ENCODE measurements at regions of chr20 and their contacts with region 1.

Region 1: GRCh38 chr20:10476319-10476724 is 41.2 kb downstream of the SLX4IP start:
- DNase-seq: peak; percentile 60
- ATAC-seq: peak; percentile 86
- H3K4me3 ChIP-seq: no peak overlapping the region
- H3K27ac ChIP-seq: peak overlapping the region; percentile 49; the same call in 1 of the 2 replicates
- H3K4me1 ChIP-seq: peaks cover 37% of the 10 kb centered on the region
- H3K27me3 ChIP-seq: no peaks in the 10 kb centered on the region
- CTCF ChIP-seq: peak; percentile 31 to 74 (median 45); a peak in 4 of 6 replicates
- EP300 ChIP-seq: peak; percentile 74 to 90; a peak in 3 of 4 replicates
- POLR2A ChIP-seq: no peak
- RAD21 ChIP-seq: peak; percentile 84

Region 2: DNA sequence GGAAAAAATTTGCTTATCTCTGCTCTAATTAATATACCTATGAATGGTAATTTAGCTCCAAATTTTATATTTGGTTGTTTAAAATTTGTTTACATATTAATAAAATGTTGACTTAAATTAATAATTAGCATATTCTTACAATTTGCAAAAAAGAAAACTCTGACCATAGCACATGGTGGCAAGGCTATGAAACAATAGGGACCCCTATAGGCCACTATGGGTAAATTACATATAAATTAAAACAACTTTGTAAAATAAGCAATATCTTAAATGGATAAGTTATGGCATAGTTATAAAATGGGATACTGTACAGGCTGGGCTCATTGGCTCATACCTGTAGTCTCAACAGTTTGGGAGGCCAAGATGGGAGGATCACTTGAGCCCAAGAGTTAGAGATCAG is 118.3 kb before region 1 on chr20:
- CTCF ChIA-PET with region 1: interaction called, 6 read pairs
- POLR2A ChIA-PET with region 1: interaction called, 3 read pairs
- RAD21 ChIA-PET with region 1: interaction called, 15 read pairs
- SMC1A ChIA-PET with region 1: interaction called, 6 read pairs
- in situ Hi-C with region 1: no loop called
- intact Hi-C with region 1: loop called (anchors 5 kb)
- DNase-seq: no peak
- ATAC-seq: no peak
- H3K4me3 ChIP-seq: no peak overlapping the region
- H3K27ac ChIP-seq: no peak overlapping the region
- H3K4me1 ChIP-seq: no peaks in the 10 kb centered on the region
- H3K27me3 ChIP-seq: no peaks in the 10 kb centered on the region
- CTCF ChIP-seq: no peak
- EP300 ChIP-seq: no peak
- POLR2A ChIP-seq: no peak
- RAD21 ChIP-seq: no peak

Region 3: GRCh38 chr20:10427060-10427692 is 49.1 kb before region 1 on chr20:
- CTCF ChIA-PET with region 1: interaction called, 57 read pairs
- POLR2A ChIA-PET with region 1: interaction called, 5 read pairs
- RAD21 ChIA-PET with region 1: interaction called, 13 read pairs
- SMC1A ChIA-PET with region 1: interaction called, 49 read pairs
- in situ Hi-C with region 1: no loop called
- intact Hi-C with region 1: no loop called
- DNase-seq: no peak
- ATAC-seq: peak; percentile 37
- H3K4me3 ChIP-seq: no peak overlapping the region
- H3K27ac ChIP-seq: no peak overlapping the region
- H3K4me1 ChIP-seq: peaks cover 18% of the 10 kb centered on the region
- H3K27me3 ChIP-seq: no peaks in the 10 kb centered on the region
- CTCF ChIP-seq: peak; percentile 75 to 78 (median 75)
- EP300 ChIP-seq: no peak
- POLR2A ChIP-seq: no peak
- RAD21 ChIP-seq: peak; percentile 63

Region 4: GRCh38 chr20:10453241-10453640 is 23.1 kb before region 1 on chr20:
- CTCF ChIA-PET with region 1: interaction called, 11 read pairs
- POLR2A ChIA-PET with region 1: interaction called, 7 read pairs
- RAD21 ChIA-PET with region 1: interaction called, 19 read pairs
- SMC1A ChIA-PET with region 1: interaction called, 26 read pairs
- in situ Hi-C with region 1: no loop called
- intact Hi-C with region 1: no loop called
- DNase-seq: peak; percentile 66
- ATAC-seq: peak; percentile 95
- H3K4me3 ChIP-seq: no peak overlapping the region
- H3K27ac ChIP-seq: peak overlapping the region; percentile 73
- H3K4me1 ChIP-seq: peaks cover 17% of the 10 kb centered on the region
- H3K27me3 ChIP-seq: no peaks in the 10 kb centered on the region
- CTCF ChIP-seq: no peak
- EP300 ChIP-seq: peak; percentile 36 to 60; a peak in 2 of 4 replicates
- POLR2A ChIP-seq: no peak
- RAD21 ChIP-seq: no peak

Region 5: GRCh38 chr20:10536531-10536930 is 60.2 kb after region 1 on chr20:
- CTCF ChIA-PET with region 1: interaction called, 10 read pairs
- POLR2A ChIA-PET with region 1: interaction called, 3 read pairs
- RAD21 ChIA-PET with region 1: interaction called, 13 read pairs
- SMC1A ChIA-PET with region 1: interaction called, 34 read pairs
- in situ Hi-C with region 1: no loop called
- intact Hi-C with region 1: loop called (anchors 10 kb)
- DNase-seq: no peak
- ATAC-seq: peak; percentile 74
- H3K4me3 ChIP-seq: no peak overlapping the region
- H3K27ac ChIP-seq: no peak overlapping the region
- H3K4me1 ChIP-seq: peaks cover 1% of the 10 kb centered on the region
- H3K27me3 ChIP-seq: no peaks in the 10 kb centered on the region
- CTCF ChIP-seq: peak; percentile 22 to 55 (median 54); a peak in 5 of 6 replicates
- EP300 ChIP-seq: no peak
- POLR2A ChIP-seq: no peak
- RAD21 ChIP-seq: peak; percentile 52; the same call in 1 of the 2 replicates

Region 6: GRCh38 chr20:10673988-10674711 is 197.8 kb after region 1 on chr20 and contains the start of gene JAG1:
- CTCF ChIA-PET with region 1: interaction called, 11 read pairs
- POLR2A ChIA-PET with region 1: no interaction called
- RAD21 ChIA-PET with region 1: interaction called, 4 read pairs
- SMC1A ChIA-PET with region 1: interaction called, 11 read pairs
- in situ Hi-C with region 1: no loop called
- intact Hi-C with region 1: loop called (anchors 10 kb)
- DNase-seq: peak; percentile 60
- ATAC-seq: peak; percentile 64
- H3K4me3 ChIP-seq: peak within 1 kb of the TSS; percentile 81
- H3K27ac ChIP-seq: peak within 1 kb of the TSS; percentile 66
- H3K4me1 ChIP-seq: peaks cover 27% of the 10 kb centered on the region
- H3K27me3 ChIP-seq: peaks cover 0 to 5% of the 10 kb centered on the region in 2 experiments; a peak in 2 of 4 replicates
- CTCF ChIP-seq: no peak
- EP300 ChIP-seq: no peak
- POLR2A ChIP-seq: peak; percentile 72
- RAD21 ChIP-seq: no peak
- polyA plus RNA-seq, gene JAG1: 0.66 to 1.0 TPM